Mammary epithelial cell (primary cell): ENCODE measurements at regions of chr1 and their contacts with region 1.

Region 1: DNA sequence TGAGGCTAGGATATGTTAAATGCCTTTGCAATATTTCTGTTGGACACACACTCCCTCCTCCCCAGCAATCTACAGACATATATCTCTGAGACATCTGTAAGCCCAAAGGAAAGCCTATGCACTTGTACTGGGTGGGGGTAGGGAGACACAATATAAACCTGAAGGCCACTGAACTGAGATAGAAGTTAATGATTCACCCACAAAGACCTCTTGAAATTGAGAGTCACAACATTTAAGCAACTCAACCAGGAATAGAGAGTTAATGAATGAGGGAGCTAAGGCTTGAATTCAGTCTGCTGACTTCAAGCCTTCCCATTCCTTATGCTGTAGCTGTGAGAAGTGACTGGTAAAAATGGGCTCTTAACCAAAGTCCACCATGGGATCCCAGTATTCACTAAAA is 5.0 kb downstream of the OR10J1 start:
- DNase-seq: no peak
- H3K4me3 ChIP-seq: no peak overlapping the region
- H3K27ac ChIP-seq: no peak overlapping the region
- H3K4me1 ChIP-seq: no peaks in the 10 kb centered on the region
- H3K27me3 ChIP-seq: no peaks in the 10 kb centered on the region
- CTCF ChIP-seq: no peak

Region 2: DNA sequence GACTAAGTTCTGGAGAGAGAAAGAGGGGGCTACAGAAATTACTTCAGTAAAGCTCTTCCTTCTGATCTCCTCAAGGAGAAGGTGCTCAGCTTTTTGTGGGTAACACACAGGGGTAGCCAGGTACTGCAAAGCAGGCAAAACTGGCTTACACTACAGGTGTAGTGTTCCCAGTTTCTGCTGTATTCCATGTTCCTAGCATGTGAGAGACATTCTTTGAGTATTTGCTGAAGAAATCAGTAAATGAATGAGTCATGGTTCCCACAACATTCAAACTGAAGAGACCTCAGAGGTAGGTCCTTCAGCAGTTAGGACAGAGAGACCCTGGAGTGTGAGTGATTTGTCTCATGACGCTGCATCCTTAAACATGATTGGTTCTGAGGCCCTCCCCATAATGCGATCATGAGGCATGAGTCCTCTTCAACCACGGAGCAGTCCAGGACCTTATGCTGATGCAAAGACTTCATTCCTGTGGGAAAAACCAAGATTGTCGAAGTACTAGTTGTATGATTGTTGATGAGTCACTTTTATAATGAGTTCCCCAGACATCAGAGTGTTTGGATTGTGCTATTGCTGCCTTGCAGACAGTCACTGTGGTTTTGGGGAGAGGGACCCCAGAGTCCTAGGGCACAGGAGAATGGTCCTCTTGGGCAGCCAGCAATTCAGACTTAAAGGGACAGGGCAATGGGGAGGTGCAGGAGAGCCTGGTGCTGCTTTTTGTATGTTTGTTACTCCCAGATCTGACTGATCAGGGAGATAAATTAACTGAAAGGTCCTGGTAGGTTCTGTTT is 15.2 kb before region 1 on chr1:
- CTCF ChIA-PET with region 1: no interaction called
- dilution Hi-C with region 1: no loop called
- in situ Hi-C with region 1: no loop called
- intact Hi-C with region 1: loop called (anchors 2 kb)
- DNase-seq: peak; percentile 78
- H3K4me3 ChIP-seq: no peak overlapping the region
- H3K27ac ChIP-seq: no peak overlapping the region
- H3K4me1 ChIP-seq: peaks cover 8% of the 10 kb centered on the region
- H3K27me3 ChIP-seq: no peaks in the 10 kb centered on the region
- CTCF ChIP-seq: no peak

Region 3: GRCh38 chr1:159492575-159493323 is 48.2 kb after region 1 on chr1:
- CTCF ChIA-PET with region 1: no interaction called
- dilution Hi-C with region 1: loop called (anchors 5 kb)
- in situ Hi-C with region 1: no loop called
- intact Hi-C with region 1: no loop called
- DNase-seq: no peak
- H3K4me3 ChIP-seq: no peak overlapping the region
- H3K27ac ChIP-seq: no peak overlapping the region
- H3K4me1 ChIP-seq: peaks cover 5% of the 10 kb centered on the region
- H3K27me3 ChIP-seq: no peaks in the 10 kb centered on the region
- CTCF ChIP-seq: no peak